Panc1 (cell line): ENCODE measurements at regions of chr1 and their contacts with region 1.

Region 1: GRCh38 chr1:31938174-31938950 is at the start of gene PTP4A2:
- DNase-seq: peak; percentile 92
- ATAC-seq: peak; percentile 86
- H3K4me3 ChIP-seq: peak within 1 kb of the TSS; percentile 62 to 75
- H3K27ac ChIP-seq: peak within 1 kb of the TSS; percentile 98
- H3K4me1 ChIP-seq: peaks cover 56% of the 10 kb centered on the region
- H3K27me3 ChIP-seq: no peaks in the 10 kb centered on the region
- CTCF ChIP-seq: peak; percentile 91
- total RNA-seq, gene PTP4A2: 559 TPM

Region 2: DNA sequence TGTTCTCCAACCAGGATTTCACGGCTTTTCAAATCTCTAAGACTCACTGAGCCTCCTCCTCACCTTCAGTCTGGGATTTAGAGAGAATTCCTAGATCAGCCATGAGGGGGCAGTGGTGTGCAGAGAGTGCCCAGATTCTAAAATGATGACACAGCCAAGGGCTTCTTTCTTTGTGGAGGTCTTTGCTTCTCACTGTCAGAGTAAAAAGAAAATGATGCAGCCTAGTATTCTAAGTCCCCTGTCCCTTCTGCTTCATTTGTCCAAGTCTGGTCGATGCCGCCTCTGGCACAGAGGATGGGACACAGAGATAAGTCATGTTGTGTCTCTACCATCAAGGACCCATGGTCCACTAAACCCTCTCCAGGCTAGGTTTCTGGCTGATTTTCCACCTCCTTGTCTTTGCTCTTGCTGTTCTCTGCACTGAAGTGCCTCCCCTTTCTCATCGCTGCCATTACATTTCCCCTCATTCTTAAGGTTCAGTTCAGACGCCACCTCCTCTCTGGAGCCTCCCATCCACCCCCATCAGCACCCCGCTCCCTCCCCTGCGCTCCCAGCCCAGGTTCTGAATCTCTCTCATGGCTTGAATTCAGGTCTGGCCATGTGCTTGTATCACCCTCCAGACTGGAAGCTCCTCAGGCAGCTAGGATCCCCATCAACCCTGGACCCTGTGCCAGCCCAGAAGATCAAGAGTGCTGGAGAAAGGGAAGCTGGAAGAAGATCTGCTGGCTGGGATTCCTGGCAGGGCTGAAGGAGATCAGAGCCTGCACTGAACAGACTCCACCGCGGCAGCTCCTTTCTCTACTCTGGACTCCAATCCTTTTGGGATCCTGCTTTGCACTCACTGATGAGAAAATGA is 374.0 kb before region 1 on chr1:
- CTCF ChIA-PET with region 1: interaction called, 10 read pairs
- POLR2A ChIA-PET with region 1: no interaction called
- in situ Hi-C with region 1: no loop called
- intact Hi-C with region 1: no loop called
- DNase-seq: no peak
- ATAC-seq: peak; percentile 81
- H3K4me3 ChIP-seq: no peak overlapping the region
- H3K27ac ChIP-seq: peak overlapping the region; percentile 11; the same call in 1 of the 2 replicates
- H3K4me1 ChIP-seq: no peaks in the 10 kb centered on the region; the same call in 1 of the 2 replicates
- H3K27me3 ChIP-seq: no peaks in the 10 kb centered on the region
- CTCF ChIP-seq: peak; percentile 90

Region 3: GRCh38 chr1:31587720-31588394 is 350.5 kb before region 1 on chr1:
- CTCF ChIA-PET with region 1: no interaction called
- POLR2A ChIA-PET with region 1: no interaction called
- in situ Hi-C with region 1: no loop called
- intact Hi-C with region 1: no loop called
- DNase-seq: no peak
- ATAC-seq: peak; percentile 75
- H3K4me3 ChIP-seq: no peak overlapping the region
- H3K27ac ChIP-seq: peak overlapping the region; percentile 71
- H3K4me1 ChIP-seq: peaks cover 33% of the 10 kb centered on the region
- H3K27me3 ChIP-seq: no peaks in the 10 kb centered on the region
- CTCF ChIP-seq: peak; percentile 91

Region 4: GRCh38 chr1:31855038-31855845 is 83.1 kb before region 1 on chr1:
- CTCF ChIA-PET with region 1: no interaction called
- POLR2A ChIA-PET with region 1: interaction called, 15 read pairs
- in situ Hi-C with region 1: no loop called
- intact Hi-C with region 1: no loop called
- DNase-seq: no peak
- ATAC-seq: no peak
- H3K4me3 ChIP-seq: no peak overlapping the region
- H3K27ac ChIP-seq: no peak overlapping the region
- H3K4me1 ChIP-seq: no peaks in the 10 kb centered on the region
- H3K27me3 ChIP-seq: no peaks in the 10 kb centered on the region
- CTCF ChIP-seq: no peak

Region 5: DNA sequence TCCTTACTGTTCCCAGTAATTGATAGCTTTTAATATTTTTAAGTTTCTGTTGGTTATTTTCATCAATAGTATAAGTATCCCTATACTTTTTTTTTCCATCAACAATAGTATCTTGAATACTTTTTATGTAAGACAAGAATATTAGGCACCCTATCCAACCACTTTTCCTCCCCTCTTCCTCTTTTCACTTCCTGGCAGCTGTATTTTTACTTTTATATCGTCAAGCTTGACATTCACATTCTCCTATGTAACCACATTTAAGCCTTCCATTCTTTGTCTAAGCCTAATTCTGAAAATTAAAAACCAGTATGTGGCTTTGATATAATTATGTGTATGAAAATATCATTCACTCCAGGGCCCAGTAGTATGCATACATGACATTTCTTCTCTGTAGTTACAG is 143.7 kb after region 1 on chr1:
- CTCF ChIA-PET with region 1: no interaction called
- POLR2A ChIA-PET with region 1: no interaction called
- in situ Hi-C with region 1: no loop called
- intact Hi-C with region 1: no loop called
- DNase-seq: no peak
- ATAC-seq: no peak
- H3K4me3 ChIP-seq: no peak overlapping the region
- H3K27ac ChIP-seq: no peak overlapping the region
- H3K4me1 ChIP-seq: no peaks in the 10 kb centered on the region
- H3K27me3 ChIP-seq: no peaks in the 10 kb centered on the region
- CTCF ChIP-seq: no peak